Gastrocnemius medialis (tissue), 4 donors: ENCODE measurements at regions of chr3 and their contacts with region 1.

Region 1: DNA sequence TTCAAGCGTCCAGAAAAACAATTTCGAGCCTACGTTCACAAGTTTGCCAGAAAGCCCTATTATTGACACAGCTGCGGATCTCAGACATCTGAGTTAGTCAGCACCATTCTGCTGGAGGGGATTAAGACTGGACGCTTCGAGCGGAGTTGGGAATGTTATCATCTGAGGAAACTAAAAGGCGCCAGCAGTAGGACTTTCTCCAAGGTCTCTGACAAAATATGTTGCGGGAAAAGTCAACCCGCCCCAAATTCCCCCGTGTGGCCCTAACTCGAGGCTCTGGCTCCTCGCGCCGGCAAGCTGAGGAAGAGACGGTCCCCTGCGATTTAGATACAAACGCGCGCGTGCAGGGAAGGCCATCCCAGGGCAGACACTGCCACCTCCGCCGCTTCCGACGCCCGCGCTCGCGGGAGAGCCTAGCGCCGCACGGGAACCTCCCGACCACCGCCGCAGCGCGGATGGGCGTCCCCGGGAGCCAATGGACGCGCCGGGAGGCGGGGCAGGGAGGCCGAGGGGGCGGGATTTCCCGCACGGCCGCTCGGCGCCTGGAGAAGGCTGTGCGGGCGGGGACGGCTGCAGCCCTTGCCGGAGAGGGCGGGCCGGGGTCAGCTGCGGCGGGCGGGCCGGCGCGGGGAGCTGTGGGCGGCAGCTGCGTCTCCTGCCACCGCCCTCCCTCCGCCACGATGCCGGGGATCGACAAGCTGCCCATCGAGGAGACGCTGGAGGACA is at the start of gene APPL1:
- DNase-seq: peak; percentile 88 to 91
- ATAC-seq: peak; percentile 88 to 89
- H3K4me3 ChIP-seq: peak within 1 kb of the TSS; percentile 70 to 92 (median 84)
- H3K27ac ChIP-seq: peak within 1 kb of the TSS; percentile 82 to 98 (median 92)
- H3K4me1 ChIP-seq: peaks cover 30 to 31% of the 10 kb centered on the region in 2 donors
- H3K27me3 ChIP-seq: no peaks in the 10 kb centered on the region
- CTCF ChIP-seq: peak in 1 of 5 experiments; percentile 9
- POLR2A ChIP-seq: peak; percentile 92 to 94
- total RNA-seq, gene APPL1: 50.9 to 76.5 (median 57.4) TPM

Region 2: GRCh38 chr3:57169872-57170623 is 57.3 kb before region 1 on chr3:
- in situ Hi-C with region 1: no loop called
- intact Hi-C with region 1: loop called (anchors 2 kb)
- DNase-seq: peak; percentile 40 to 56
- ATAC-seq: peak; percentile 70 to 85
- H3K4me3 ChIP-seq: peak overlapping the region; percentile 49 to 56 (median 52)
- H3K27ac ChIP-seq: no peak overlapping the region
- H3K4me1 ChIP-seq: no peaks in the 10 kb centered on the region
- H3K27me3 ChIP-seq: no peaks in the 10 kb centered on the region
- CTCF ChIP-seq: peak; percentile 47 to 90 (median 83)
- POLR2A ChIP-seq: no peak

Region 3: GRCh38 chr3:57244946-57245345 is 17.6 kb after region 1 on chr3:
- in situ Hi-C with region 1: no loop called
- intact Hi-C with region 1: no loop called
- DNase-seq: no peak
- ATAC-seq: no peak
- H3K4me3 ChIP-seq: no peak overlapping the region
- H3K27ac ChIP-seq: no peak overlapping the region
- H3K4me1 ChIP-seq: no peaks in the 10 kb centered on the region
- H3K27me3 ChIP-seq: no peaks in the 10 kb centered on the region
- CTCF ChIP-seq: no peak
- POLR2A ChIP-seq: no peak

Region 4: DNA sequence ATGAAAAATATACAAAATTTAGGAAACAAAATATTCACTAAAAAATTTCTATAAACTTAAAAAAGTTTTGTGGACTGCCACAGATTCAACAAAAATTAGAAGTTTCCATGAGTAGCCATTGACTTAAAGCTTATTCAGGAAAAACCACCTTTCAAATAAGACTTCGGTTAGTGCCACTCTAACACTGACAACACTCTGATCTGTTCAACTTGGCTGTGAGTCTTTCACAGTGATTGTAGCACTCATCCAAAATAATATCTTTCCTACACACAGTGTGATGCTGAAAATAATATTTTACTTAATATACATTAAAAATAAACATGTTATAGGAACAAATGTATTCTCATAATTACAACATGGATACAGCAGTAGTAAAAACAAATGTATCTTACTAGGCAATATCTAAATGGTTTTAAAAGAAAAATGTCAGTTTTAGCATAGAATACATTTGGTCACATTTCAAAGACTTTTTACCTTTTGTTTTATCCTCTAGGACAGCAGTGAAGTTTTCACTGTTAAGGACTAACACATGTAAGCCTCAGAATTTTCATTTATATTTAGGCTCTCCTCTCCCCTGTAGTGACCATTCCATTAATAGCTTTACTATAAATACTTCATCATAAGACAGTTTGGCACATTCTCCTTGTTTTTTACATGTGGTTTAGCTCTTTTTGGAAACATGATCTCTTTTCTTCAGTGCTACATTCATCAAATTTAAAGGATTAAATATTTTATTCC is 65.0 kb after region 1 on chr3 and contains the start of gene ASB14:
- in situ Hi-C with region 1: no loop called
- intact Hi-C with region 1: loop called (anchors 5 kb)
- DNase-seq: no peak
- ATAC-seq: peak; percentile 75 to 84
- H3K4me3 ChIP-seq: peak within 1 kb of the TSS; percentile 19 to 40 (median 22)
- H3K27ac ChIP-seq: peak within 1 kb of the TSS; percentile 63 to 82 (median 69)
- H3K4me1 ChIP-seq: peaks cover 13 to 23% of the 10 kb centered on the region in 2 donors
- H3K27me3 ChIP-seq: no peaks in the 10 kb centered on the region
- CTCF ChIP-seq: no peak
- POLR2A ChIP-seq: no peak
- total RNA-seq, gene ASB14: 1.9 to 3.4 (median 2.6) TPM

Region 5: DNA sequence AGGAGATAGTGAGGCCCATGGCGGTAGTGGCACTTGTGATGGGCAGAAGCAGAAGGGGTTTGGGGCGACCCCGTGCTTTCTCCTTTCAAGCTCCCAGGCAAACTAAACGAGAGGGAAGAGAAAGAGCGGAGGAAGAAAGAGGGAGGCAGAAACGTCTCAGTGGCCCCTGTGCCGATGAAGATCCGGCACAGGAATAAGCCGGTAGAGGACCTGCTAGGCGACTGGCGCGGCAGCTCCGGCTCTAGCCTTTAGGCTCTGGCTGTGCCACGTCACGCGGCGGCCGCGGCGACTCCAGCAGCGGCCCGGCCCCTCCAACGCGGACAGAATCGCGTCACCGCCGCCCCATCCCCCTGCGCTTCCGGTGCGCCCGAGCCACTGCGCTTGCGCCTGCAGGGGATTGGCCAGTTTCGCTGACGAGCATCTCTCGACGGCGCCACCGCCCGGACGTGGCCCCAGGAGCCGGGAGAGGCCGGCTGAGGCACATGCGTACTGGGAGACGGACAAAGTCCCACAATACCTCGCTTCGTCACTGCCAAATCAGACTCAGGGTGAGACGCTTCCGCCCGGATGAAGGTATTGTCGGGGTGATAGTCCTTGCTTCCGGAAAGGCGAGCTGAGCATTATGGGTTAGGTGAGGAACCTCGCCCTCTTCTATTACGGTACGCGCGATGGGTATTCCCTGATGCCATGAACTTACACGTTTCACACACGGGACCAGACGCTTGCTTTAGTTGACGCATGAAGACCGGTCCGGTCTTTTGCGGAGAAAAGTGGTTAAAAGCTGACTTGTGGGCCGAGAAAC is 370.0 kb after region 1 on chr3 and contains the start of gene ARF4:
- in situ Hi-C with region 1: no loop called
- intact Hi-C with region 1: loop called (anchors 5 kb)
- DNase-seq: peak; percentile 99 to 100
- ATAC-seq: peak; percentile 92 to 94
- H3K4me3 ChIP-seq: peak within 1 kb of the TSS; percentile 72 to 96 (median 92)
- H3K27ac ChIP-seq: peak within 1 kb of the TSS; percentile 95 to 99 (median 98)
- H3K4me1 ChIP-seq: peaks cover 44 to 48% of the 10 kb centered on the region in 2 donors
- H3K27me3 ChIP-seq: no peaks in the 10 kb centered on the region
- CTCF ChIP-seq: peak in 2 of 5 experiments; percentile 7 to 8
- POLR2A ChIP-seq: peak; percentile 97 to 98
- total RNA-seq, gene ARF4: 36.2 to 55.2 (median 47.7) TPM

Region 6: GRCh38 chr3:57755668-57756527 is 528.5 kb after region 1 on chr3 and contains the start of gene SLMAP:
- in situ Hi-C with region 1: no loop called
- intact Hi-C with region 1: loop called (anchors 2 kb)
- DNase-seq: peak; percentile 98 to 99
- ATAC-seq: peak; percentile 94 to 95
- H3K4me3 ChIP-seq: peak within 1 kb of the TSS; percentile 86 to 98 (median 96)
- H3K27ac ChIP-seq: peak within 1 kb of the TSS; percentile 96 to 99 (median 98)
- H3K4me1 ChIP-seq: peaks cover 32 to 37% of the 10 kb centered on the region in 2 donors
- H3K27me3 ChIP-seq: no peaks in the 10 kb centered on the region
- CTCF ChIP-seq: peak in 2 of 5 experiments; percentile 4 to 10
- POLR2A ChIP-seq: peak; percentile 80 to 86
- total RNA-seq, gene SLMAP: 81.1 to 113 (median 97.1) TPM